Heart left ventricle (tissue), 16 donors: ENCODE measurements at regions of chr14 and their contacts with region 1.

Region 1: GRCh38 chr14:54175298-54175942 is 218.8 kb upstream of the BMP4 start:
- DNase-seq: peak in 4 of 5 donors; percentile 31 to 61 (median 46)
- ATAC-seq: peak in 3 of 4 donors; percentile 50 to 62 (median 58)
- H3K4me3 ChIP-seq: no peak overlapping the region
- H3K27ac ChIP-seq: peak overlapping the region in 4 of 12 donors; percentile 3 to 64 (median 36)
- H3K4me1 ChIP-seq: peaks cover 0 to 46% (median 21%) of the 10 kb centered on the region in 12 donors
- H3K27me3 ChIP-seq: peaks cover 0 to 3% (median 0%) of the 10 kb centered on the region in 9 donors
- CTCF ChIP-seq: peak; percentile 75 to 92 (median 86)
- POLR2A ChIP-seq: no peak

Region 2: DNA sequence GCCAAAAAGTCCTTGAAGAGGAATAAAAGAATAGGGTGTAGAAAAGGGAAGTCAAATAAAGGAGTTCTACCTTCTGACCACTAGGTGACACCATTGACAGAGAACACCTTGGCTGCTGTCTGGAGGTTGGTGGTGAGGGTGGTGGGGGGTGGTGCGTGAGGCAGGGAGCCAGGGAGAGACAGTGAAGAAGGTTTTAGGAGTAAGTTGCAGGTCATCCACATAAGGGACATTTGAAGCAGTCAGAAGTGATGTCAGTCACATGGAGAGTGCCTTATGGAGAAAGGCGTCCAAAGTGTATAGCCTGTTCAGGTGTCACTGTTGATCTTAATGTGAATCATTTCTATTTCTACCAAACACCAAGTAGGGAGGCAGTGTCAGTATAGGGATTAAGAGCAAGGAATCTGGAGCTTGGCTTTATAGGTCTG is 743.0 kb before region 1 on chr14:
- intact Hi-C with region 1: loop called in 6 of 10 experiments (anchors 10 kb)
- DNase-seq: no peak
- ATAC-seq: peak in 3 of 4 donors; percentile 47 to 61 (median 54)
- H3K4me3 ChIP-seq: no peak overlapping the region
- H3K27ac ChIP-seq: no peak overlapping the region
- H3K4me1 ChIP-seq: no peaks in the 10 kb centered on the region
- H3K27me3 ChIP-seq: no peaks in the 10 kb centered on the region
- CTCF ChIP-seq: peak; percentile 12 to 62 (median 49)
- POLR2A ChIP-seq: no peak

Region 3: GRCh38 chr14:53683229-53683628 is 492.2 kb before region 1 on chr14:
- intact Hi-C with region 1: no loop called
- DNase-seq: no peak
- ATAC-seq: no peak
- H3K4me3 ChIP-seq: no peak overlapping the region
- H3K27ac ChIP-seq: no peak overlapping the region
- H3K4me1 ChIP-seq: no peaks in the 10 kb centered on the region
- H3K27me3 ChIP-seq: no peaks in the 10 kb centered on the region
- CTCF ChIP-seq: no peak
- POLR2A ChIP-seq: no peak

Region 4: DNA sequence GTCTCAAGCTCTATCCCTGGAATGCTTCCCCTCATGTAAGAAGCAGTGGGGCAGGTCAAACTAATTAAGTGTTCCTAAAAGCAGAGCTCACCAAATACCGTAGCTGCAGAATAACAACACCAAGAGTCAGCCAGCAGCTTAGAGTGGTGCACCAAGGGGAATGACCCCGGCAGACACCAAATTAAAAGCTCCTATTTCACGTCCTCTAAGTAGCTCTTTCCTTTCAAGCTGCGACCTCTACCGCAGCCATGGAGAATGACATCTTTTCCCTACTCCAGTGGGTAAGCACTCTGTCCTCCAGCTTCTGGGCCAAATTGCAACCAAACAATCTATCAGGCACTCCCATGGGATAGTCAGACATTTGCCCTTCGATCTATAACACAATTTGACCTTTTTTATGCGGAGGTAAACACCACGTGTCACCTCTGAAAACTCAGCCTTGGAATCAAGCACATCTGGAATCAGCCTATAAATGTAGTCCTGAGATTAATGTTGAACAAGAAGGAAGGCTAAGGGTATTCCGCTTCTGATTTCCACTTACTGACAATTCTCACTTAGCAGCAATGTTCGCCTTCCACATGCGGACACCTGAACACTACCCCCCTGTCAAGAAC is 153.8 kb after region 1 on chr14:
- intact Hi-C with region 1: loop called in 4 of 10 experiments (anchors 10 kb)
- DNase-seq: peak in 4 of 5 donors; percentile 30 to 49 (median 40)
- ATAC-seq: peak; percentile 62 to 84 (median 82)
- H3K4me3 ChIP-seq: no peak overlapping the region
- H3K27ac ChIP-seq: no peak overlapping the region
- H3K4me1 ChIP-seq: peaks cover 0 to 13% (median 0%) of the 10 kb centered on the region in 12 donors
- H3K27me3 ChIP-seq: no peaks in the 10 kb centered on the region
- CTCF ChIP-seq: peak; percentile 41 to 79 (median 59)
- POLR2A ChIP-seq: no peak

Region 5: GRCh38 chr14:54338696-54339317 is 163.4 kb after region 1 on chr14:
- intact Hi-C with region 1: loop called in 1 of 10 experiments (anchors 10 kb)
- DNase-seq: no peak
- ATAC-seq: no peak
- H3K4me3 ChIP-seq: no peak overlapping the region
- H3K27ac ChIP-seq: no peak overlapping the region
- H3K4me1 ChIP-seq: peaks cover 0 to 9% (median 0%) of the 10 kb centered on the region in 12 donors
- H3K27me3 ChIP-seq: no peaks in the 10 kb centered on the region
- CTCF ChIP-seq: peak in 8 of 12 donors; percentile 13 to 45 (median 26)
- POLR2A ChIP-seq: no peak

Region 6: GRCh38 chr14:54420013-54420809 is 244.8 kb after region 1 on chr14:
- intact Hi-C with region 1: no loop called
- DNase-seq: peak in 1 of 5 donors; percentile 25
- ATAC-seq: peak; percentile 47 to 67 (median 54)
- H3K4me3 ChIP-seq: no peak overlapping the region
- H3K27ac ChIP-seq: no peak overlapping the region
- H3K4me1 ChIP-seq: peaks cover 0 to 8% (median 0%) of the 10 kb centered on the region in 12 donors
- H3K27me3 ChIP-seq: no peaks in the 10 kb centered on the region
- CTCF ChIP-seq: peak; percentile 23 to 71 (median 59)
- POLR2A ChIP-seq: no peak